AG04449 (cell line): ENCODE measurements at regions of chr6 and their contacts with region 1.

Region 1: GRCh38 chr6:129981598-129981997 is 36.8 kb upstream of the L3MBTL3 start:
- DNase-seq: no peak
- H3K4me3 ChIP-seq: no peak overlapping the region
- CTCF ChIP-seq: no peak

Region 2: GRCh38 chr6:129969064-129969463 is 12.5 kb before region 1 on chr6:
- CTCF ChIA-PET with region 1: interaction called, 10 read pairs
- POLR2A ChIA-PET with region 1: no interaction called
- DNase-seq: no peak
- H3K4me3 ChIP-seq: no peak overlapping the region
- CTCF ChIP-seq: no peak